Endothelial cell of umbilical vein (primary cell): ENCODE measurements at regions of chr10 and their contacts with region 1.

Region 1: DNA sequence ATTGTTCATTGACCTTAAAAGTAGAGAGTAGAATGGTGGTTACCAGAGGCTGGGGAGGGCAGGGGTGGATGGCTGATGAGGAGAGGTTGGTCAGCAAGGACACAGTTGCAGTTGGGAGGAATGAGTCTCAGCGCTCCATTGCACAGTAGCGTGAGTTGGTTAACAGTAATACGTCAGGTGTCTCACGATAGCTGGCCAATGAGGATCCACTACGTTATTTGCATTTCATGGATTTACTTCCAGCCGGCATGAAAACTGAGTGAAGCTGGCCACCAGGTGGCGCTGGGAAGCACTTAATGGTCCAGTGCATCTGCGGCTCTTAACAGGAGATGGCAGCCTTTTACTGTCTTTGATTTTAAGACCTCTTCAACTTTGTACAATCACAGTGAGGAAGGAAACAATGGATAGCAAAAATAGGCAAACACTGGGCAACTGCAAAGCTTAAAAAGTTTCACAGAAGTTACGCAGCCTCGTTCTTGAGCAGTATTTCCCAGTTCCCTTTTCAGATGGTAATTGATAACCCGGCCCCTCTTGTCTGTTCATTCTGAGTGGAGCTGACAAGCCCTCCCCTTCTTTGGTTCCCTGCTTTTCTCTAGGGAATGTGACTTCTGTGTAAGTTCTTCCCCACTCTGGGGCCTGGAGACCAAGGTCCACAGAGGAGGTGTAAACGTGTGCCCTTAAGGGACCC is 23.7 kb downstream of the AKR1E2 start:
- DNase-seq: peak; percentile 98
- H3K4me3 ChIP-seq: no peak overlapping the region
- H3K27ac ChIP-seq: no peak overlapping the region
- H3K4me1 ChIP-seq: peaks cover 22% of the 10 kb centered on the region
- H3K27me3 ChIP-seq: no peaks in the 10 kb centered on the region
- CTCF ChIP-seq: peak; percentile 95 to 100
- POLR2A ChIP-seq: no peak

Region 2: DNA sequence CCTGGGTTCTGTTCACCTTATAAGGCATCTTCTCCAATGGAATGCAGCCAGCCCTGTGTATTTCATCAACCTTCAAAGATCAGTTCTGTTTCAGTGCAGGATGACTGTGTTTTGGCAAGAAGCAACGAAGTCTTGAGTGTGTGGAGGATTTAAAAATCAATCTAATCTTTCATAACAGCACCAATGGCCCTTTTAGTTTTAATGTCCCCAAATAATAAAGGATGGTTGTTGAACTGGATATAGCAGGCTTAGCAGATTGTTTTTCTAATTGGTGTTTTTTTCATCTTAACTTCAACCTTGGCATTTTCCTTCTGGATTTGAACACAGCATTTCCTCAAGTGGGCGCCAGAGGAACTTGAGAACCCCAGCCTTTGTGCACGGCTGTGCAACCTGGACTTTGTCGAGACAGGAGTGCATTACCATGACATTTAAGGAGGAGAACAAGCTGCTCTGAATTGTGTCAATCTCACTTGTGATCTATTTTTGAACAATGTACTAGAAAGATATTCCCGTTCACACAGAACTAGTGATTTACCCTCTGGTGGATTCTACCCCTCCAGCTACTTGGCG is 336.9 kb before region 1 on chr10:
- CTCF ChIA-PET with region 1: no interaction called
- POLR2A ChIA-PET with region 1: no interaction called
- dilution Hi-C with region 1: no loop called
- intact Hi-C with region 1: no loop called
- DNase-seq: peak; percentile 54
- H3K4me3 ChIP-seq: no peak overlapping the region
- H3K27ac ChIP-seq: no peak overlapping the region
- H3K4me1 ChIP-seq: no peaks in the 10 kb centered on the region
- H3K27me3 ChIP-seq: no peaks in the 10 kb centered on the region
- CTCF ChIP-seq: peak; percentile 36 to 43
- POLR2A ChIP-seq: no peak

Region 3: GRCh38 chr10:4532467-4532866 is 317.2 kb before region 1 on chr10:
- CTCF ChIA-PET with region 1: no interaction called
- POLR2A ChIA-PET with region 1: no interaction called
- dilution Hi-C with region 1: no loop called
- intact Hi-C with region 1: no loop called
- DNase-seq: no peak
- H3K4me3 ChIP-seq: no peak overlapping the region
- H3K27ac ChIP-seq: no peak overlapping the region
- H3K4me1 ChIP-seq: no peaks in the 10 kb centered on the region
- H3K27me3 ChIP-seq: no peaks in the 10 kb centered on the region
- CTCF ChIP-seq: no peak
- POLR2A ChIP-seq: no peak

Region 4: GRCh38 chr10:4825851-4826665 is 23.6 kb before region 1 on chr10 and contains the start of gene AKR1E2:
- CTCF ChIA-PET with region 1: interaction called, 27 read pairs
- POLR2A ChIA-PET with region 1: no interaction called
- dilution Hi-C with region 1: no loop called
- intact Hi-C with region 1: loop called (anchors 1 kb)
- DNase-seq: peak; percentile 94
- H3K4me3 ChIP-seq: peak within 1 kb of the TSS; percentile 25 to 50 (median 39)
- H3K27ac ChIP-seq: peak within 1 kb of the TSS; percentile 78
- H3K4me1 ChIP-seq: peaks cover 5% of the 10 kb centered on the region
- H3K27me3 ChIP-seq: peaks cover 0 to 1% of the 10 kb centered on the region in 2 experiments
- CTCF ChIP-seq: no peak
- POLR2A ChIP-seq: no peak
- total RNA-seq, gene AKR1E2: 5.8 and 8.2 TPM in 2 replicates

Region 5: DNA sequence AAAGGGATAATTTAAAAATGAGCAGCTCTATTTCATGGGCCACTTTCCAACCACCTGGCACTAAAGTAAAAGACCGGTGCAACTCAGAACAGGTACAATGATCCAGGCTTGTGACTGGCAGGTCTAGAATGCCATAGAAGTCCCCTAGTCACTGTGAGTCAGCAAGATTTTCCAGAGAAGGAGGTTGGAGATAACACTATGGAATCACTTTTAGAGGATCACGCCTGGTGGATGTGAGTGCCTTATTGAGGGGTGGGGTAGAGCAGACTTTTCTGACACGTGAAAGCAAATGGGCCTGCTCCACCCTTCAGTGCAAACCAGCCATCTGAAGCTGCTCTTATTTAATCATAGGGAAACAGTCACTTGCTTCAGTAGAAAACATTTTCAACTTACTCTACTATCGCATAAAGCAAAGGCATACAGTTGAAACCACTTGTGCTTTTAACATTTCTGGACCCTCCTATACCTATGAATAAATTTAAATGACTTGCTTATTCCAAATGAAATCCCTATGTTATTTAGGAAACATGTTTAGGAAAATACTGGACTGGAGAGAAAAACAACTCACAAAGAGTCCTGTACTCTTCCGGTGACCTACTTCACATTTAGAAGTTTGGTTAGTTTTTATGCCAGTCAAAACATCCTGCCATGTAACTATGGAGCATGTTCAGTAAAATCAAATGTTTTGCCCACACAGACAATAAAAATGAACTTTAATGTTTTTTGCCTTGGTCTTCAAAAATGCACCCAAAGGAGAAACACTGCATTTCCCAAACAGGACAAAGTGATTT is 92.0 kb after region 1 on chr10:
- CTCF ChIA-PET with region 1: interaction called, 5 read pairs
- POLR2A ChIA-PET with region 1: no interaction called
- dilution Hi-C with region 1: no loop called
- intact Hi-C with region 1: loop called (anchors 2 kb)
- DNase-seq: peak; percentile 66
- H3K4me3 ChIP-seq: no peak overlapping the region
- H3K27ac ChIP-seq: peak overlapping the region; percentile 87
- H3K4me1 ChIP-seq: peaks cover 20% of the 10 kb centered on the region
- H3K27me3 ChIP-seq: no peaks in the 10 kb centered on the region
- CTCF ChIP-seq: no peak
- POLR2A ChIP-seq: no peak

Region 6: GRCh38 chr10:5147255-5147980 is 297.7 kb after region 1 on chr10:
- CTCF ChIA-PET with region 1: no interaction called
- POLR2A ChIA-PET with region 1: no interaction called
- dilution Hi-C with region 1: no loop called
- intact Hi-C with region 1: no loop called
- DNase-seq: no peak
- H3K4me3 ChIP-seq: no peak overlapping the region
- H3K27ac ChIP-seq: no peak overlapping the region
- H3K4me1 ChIP-seq: no peaks in the 10 kb centered on the region
- H3K27me3 ChIP-seq: no peaks in the 10 kb centered on the region
- CTCF ChIP-seq: no peak
- POLR2A ChIP-seq: no peak

Region 7: DNA sequence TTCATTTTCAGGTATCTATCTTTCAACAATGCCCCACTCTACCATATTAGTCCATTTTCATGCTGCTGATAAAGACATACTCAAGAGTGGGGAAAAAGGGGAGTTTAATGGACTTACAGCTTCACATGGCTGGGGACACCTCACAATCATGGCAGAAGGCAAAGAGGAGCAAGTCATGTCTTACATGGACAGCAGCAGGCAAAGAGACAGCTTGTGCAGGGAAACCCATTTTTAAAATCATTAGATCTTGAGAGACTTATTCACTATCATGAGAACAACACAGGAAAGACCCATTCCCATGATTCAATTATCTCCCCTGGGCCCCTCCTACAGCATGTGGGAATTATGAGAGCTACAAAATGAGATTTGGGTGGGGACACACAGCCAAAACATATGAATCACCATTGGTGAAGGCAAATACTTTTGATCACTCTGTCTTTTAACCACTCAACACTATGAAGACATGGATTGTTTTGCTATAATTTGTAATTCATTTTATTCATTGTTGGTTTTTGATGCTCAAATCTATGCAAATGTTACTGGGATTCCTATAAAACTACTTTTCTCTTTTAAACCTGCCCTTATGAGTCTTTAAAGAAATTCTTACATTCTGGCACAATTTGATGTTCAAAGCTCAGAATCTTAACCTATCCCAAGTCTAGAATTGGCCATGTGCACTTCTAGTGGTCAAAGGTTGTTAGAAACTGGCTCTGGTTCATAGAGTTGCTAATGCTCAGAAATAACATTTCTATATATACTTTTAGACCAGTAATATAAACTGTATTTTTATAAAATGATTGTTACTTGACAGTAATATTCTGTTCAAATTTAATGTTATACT is 362.2 kb after region 1 on chr10:
- CTCF ChIA-PET with region 1: no interaction called
- POLR2A ChIA-PET with region 1: no interaction called
- dilution Hi-C with region 1: no loop called
- intact Hi-C with region 1: no loop called
- DNase-seq: no peak
- H3K4me3 ChIP-seq: no peak overlapping the region
- H3K27ac ChIP-seq: no peak overlapping the region
- H3K4me1 ChIP-seq: no peaks in the 10 kb centered on the region
- H3K27me3 ChIP-seq: peaks cover 0 to 7% of the 10 kb centered on the region in 2 experiments
- CTCF ChIP-seq: no peak
- POLR2A ChIP-seq: no peak

Region 8: DNA sequence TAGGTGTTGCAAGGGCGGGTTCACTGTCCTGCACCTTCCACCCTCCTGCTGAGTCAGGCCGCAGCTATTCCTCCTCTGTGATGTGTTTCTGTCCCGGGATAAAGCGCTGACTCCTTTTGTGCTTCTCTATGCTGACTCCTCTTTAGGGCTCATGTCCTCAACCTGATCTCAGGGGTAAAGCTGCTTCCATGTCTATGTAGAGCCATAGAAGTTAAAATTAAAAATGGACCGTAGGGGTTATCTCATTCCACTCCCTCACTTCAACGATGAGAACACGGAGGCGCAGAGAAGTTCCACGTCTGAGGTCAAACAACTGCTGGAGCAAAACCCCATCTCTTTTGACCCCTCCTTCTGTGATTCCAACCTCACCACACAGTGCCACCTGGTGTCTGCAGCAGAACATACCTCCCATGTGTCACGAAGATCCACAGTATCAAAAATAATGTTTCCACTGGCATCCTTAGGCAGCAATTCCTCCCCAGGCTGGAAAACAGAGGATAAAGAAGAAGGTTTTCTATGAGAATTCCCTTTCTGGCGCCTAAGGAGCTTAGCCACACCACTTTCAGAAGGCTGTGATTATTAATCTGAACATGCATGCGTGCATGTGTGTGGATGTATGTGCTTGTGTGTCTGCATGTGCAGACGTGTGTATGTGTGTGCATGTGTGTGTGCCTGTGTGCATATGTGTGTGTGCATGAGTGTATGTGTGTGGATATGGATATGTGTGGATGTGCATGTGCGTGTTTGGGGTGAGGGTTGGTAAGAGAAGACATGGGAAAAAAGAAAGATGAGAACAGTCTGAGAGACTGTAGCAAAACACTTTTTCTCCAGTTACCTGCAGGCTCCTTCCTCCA is 433.8 kb after region 1 on chr10:
- CTCF ChIA-PET with region 1: interaction called, 21 read pairs
- POLR2A ChIA-PET with region 1: no interaction called
- dilution Hi-C with region 1: no loop called
- intact Hi-C with region 1: loop called (anchors 1 kb)
- DNase-seq: peak; percentile 46
- H3K4me3 ChIP-seq: no peak overlapping the region
- H3K27ac ChIP-seq: peak overlapping the region; percentile 71
- H3K4me1 ChIP-seq: peaks cover 14% of the 10 kb centered on the region
- H3K27me3 ChIP-seq: no peaks in the 10 kb centered on the region
- CTCF ChIP-seq: peak; percentile 47 to 63
- POLR2A ChIP-seq: no peak

Region 9: GRCh38 chr10:5385224-5385623 is 535.5 kb after region 1 on chr10:
- CTCF ChIA-PET with region 1: interaction called, 33 read pairs
- POLR2A ChIA-PET with region 1: no interaction called
- dilution Hi-C with region 1: no loop called
- intact Hi-C with region 1: loop called (anchors 1 kb)
- DNase-seq: no peak
- H3K4me3 ChIP-seq: no peak overlapping the region
- H3K27ac ChIP-seq: no peak overlapping the region
- H3K4me1 ChIP-seq: no peaks in the 10 kb centered on the region
- H3K27me3 ChIP-seq: peaks cover 0 to 2% of the 10 kb centered on the region in 2 experiments
- CTCF ChIP-seq: no peak
- POLR2A ChIP-seq: no peak

Region 10: DNA sequence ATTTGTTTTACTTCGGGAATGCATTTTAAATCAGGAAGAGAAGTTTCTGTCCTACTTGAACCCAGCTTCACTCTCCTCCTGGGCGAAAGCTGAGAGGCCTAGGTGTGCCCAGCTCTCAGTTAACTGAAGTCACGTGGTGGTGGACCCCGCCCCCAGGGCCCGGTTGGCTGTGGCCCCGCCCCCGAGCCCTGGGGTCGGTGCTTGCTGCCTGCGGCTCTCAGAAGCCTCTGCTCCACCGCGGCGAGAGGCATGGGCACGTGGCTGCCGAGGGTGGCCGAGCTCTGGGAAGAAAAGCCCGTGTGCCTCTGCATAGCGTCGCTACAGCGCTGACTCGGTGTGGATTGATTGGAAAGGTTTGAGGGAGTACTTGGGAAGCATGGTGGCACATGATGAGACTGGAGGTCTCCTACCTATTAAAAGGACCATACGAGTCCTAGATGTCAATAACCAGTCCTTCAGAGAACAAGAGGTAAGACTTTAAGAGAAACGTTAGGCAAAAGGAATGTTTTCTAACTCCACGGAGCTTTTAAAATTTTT is 596.8 kb after region 1 on chr10:
- CTCF ChIA-PET with region 1: interaction called, 15 read pairs
- POLR2A ChIA-PET with region 1: no interaction called
- dilution Hi-C with region 1: no loop called
- intact Hi-C with region 1: no loop called
- DNase-seq: peak; percentile 95
- H3K4me3 ChIP-seq: peak overlapping the region; percentile 47 to 89 (median 57)
- H3K27ac ChIP-seq: peak overlapping the region; percentile 50
- H3K4me1 ChIP-seq: peaks cover 35% of the 10 kb centered on the region
- H3K27me3 ChIP-seq: no peaks in the 10 kb centered on the region
- CTCF ChIP-seq: no peak
- POLR2A ChIP-seq: peak; percentile 99